OCI-LY7 (cell line): ENCODE measurements at regions of chr12 and their contacts with region 1.

Region 1: GRCh38 chr12:10048526-10048925 is 18.0 kb downstream of the CLEC9A start:
- DNase-seq: no peak
- H3K4me3 ChIP-seq: no peak overlapping the region
- H3K27ac ChIP-seq: no peak overlapping the region
- H3K4me1 ChIP-seq: peaks cover 9% of the 10 kb centered on the region
- CTCF ChIP-seq: no peak

Region 2: DNA sequence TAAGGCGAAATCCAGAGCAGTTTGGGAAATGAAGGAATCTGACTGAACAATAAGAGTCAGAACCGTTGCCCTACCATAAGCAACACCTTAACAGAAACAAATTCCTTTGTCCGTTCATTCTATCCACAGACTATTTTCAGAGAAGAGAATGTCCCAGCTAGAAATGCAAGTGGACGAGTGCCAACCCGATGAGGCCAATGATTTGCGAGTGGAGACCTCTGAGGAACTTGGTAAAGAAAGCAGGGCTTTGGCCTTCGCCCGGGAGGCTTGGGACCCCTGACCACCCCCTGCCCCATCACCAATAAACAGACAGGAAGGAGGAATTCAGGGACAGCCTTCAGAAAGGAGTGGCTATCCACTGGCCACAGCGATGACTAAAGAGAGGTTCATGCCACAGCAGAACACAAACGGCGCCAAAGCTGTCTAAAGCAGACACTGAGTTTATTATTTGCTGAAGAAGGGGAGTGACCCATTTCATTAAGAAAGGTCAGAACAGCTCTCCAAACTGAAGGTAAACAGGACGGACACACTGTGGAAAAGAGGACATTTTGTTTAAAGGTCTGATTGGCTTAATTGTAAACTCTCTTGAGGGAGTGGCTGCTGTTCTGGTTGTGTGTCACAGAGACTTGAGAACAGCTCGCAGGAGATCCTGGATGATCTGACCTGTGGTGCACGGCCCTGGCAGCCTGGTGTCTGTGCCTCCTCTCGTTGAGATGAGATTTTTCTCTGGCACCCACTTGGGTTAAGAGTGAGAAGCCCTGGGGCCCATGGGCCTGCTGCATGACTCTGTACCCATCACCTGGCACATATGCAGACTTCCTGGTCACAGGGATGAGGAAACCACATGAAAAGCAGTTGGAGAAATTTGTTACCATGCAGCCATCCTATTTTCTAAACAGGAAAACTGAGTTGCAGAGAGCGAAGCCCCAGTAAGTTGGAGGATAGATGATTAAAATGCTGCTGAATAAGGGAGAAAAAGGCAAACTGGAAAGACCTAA is 698.3 kb before region 1 on chr12:
- CTCF ChIA-PET with region 1: no interaction called
- POLR2A ChIA-PET with region 1: no interaction called
- intact Hi-C with region 1: no loop called
- DNase-seq: no peak
- H3K4me3 ChIP-seq: no peak overlapping the region
- H3K27ac ChIP-seq: no peak overlapping the region
- H3K4me1 ChIP-seq: no peaks in the 10 kb centered on the region
- CTCF ChIP-seq: no peak

Region 3: DNA sequence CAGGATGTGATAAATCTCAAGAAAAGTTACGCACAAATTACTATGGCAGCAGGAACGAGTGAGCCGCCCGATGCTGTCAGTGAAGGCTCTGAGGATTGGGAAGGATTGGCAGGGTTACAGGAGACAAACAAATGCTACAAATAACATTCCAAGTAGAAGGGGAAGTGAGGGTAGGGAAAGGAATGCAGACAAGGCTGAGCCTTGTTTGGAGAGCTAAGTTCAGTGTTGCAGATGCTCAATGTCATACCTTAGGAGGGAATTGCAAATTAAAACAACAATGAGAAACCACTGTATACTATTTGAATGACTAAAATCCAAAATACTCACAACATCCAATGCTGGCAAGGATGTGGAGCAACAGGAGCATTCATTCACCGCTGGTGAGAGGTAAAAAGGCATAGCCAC is 16.8 kb before region 1 on chr12:
- CTCF ChIA-PET with region 1: no interaction called
- POLR2A ChIA-PET with region 1: no interaction called
- intact Hi-C with region 1: no loop called
- DNase-seq: no peak
- H3K4me3 ChIP-seq: no peak overlapping the region
- H3K27ac ChIP-seq: no peak overlapping the region
- H3K4me1 ChIP-seq: no peaks in the 10 kb centered on the region
- CTCF ChIP-seq: no peak

Region 4: GRCh38 chr12:11630046-11630706 is 1581.7 kb after region 1 on chr12:
- CTCF ChIA-PET with region 1: no interaction called
- POLR2A ChIA-PET with region 1: no interaction called
- intact Hi-C with region 1: loop called (anchors 10 kb)
- DNase-seq: no peak
- H3K4me3 ChIP-seq: no peak overlapping the region
- H3K27ac ChIP-seq: no peak overlapping the region
- H3K4me1 ChIP-seq: peaks cover 21% of the 10 kb centered on the region
- CTCF ChIP-seq: no peak